ENCODE measurements at regions of chr1 and their contacts with region 1.

Region 1: GRCh38 chr1:6569033-6569432 is 10.8 kb upstream of the ZBTB48 start:
- DNase-seq: no peak
- H3K4me3 ChIP-seq: no peak overlapping the region
- H3K27ac ChIP-seq: no peak overlapping the region
- H3K4me1 ChIP-seq: no peaks in the 10 kb centered on the region
- H3K27me3 ChIP-seq: no peaks in the 10 kb centered on the region
- CTCF ChIP-seq: no peak
- POLR2A ChIP-seq: no peak

Region 2: GRCh38 chr1:6154525-6155319 is 414.3 kb before region 1 on chr1:
- intact Hi-C with region 1: loop called (anchors 5 kb)
- DNase-seq: no peak
- H3K4me3 ChIP-seq: no peak overlapping the region
- H3K27ac ChIP-seq: no peak overlapping the region
- H3K4me1 ChIP-seq: peaks cover 0 to 7% of the 10 kb centered on the region in 2 donors
- H3K27me3 ChIP-seq: peaks cover 0 to 3% of the 10 kb centered on the region in 2 donors
- CTCF ChIP-seq: no peak
- POLR2A ChIP-seq: no peak

Measured in breast epithelium (tissue), 4 donors.